ENCODE measurements at regions of chr11 and their contacts with region 1.

Region 1: DNA sequence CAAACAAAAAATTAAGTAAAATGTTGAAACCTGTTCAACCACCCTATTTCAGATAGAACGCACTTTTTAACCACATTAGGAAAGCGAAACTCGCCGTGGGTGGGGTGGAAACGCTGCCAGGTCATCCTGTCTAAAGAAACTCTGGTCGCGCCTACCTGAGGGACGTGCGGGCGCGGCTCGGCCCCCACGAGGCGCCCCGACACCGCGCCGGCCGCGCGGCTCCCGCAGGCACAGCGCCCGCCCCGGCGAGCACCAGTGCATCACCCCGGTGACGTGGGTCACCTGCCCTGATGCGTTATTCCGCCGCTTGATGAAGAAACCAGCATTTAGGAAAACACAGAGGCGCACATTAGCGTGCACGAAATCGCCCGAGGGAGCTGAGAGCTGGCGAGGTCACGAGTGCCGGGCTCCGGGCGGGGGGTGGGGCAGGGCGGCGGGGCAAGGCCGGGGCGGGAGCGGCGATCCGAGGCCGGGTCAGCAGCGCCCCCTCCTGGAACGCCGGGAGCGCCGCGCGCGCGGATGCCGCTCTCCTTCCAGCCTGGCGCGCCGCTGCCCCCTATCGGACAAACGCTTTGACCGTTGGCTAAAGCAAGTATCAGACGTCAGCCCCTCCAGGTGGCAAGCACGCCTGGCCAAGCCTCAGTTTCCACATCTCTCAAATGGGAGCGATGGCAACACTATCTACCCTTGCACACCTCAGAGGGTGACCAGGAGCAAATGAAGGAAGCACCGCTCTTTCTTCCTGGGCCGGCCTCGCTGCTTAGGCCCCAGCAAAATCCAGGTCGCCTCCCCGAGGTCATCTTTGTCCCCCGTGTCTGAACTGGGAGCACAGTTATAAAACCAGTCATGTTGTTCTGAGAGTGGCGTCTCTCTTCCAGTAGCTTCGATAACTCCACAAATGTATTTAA is 15.7 kb upstream of the SNX32 start:
- DNase-seq: peak; percentile 97 to 98
- H3K4me3 ChIP-seq: peak overlapping the region; percentile 61 to 81 (median 70)
- H3K27ac ChIP-seq: peak overlapping the region; percentile 68 to 89 (median 87)
- H3K4me1 ChIP-seq: peaks cover 4 to 43% (median 33%) of the 10 kb centered on the region in 4 donors
- H3K27me3 ChIP-seq: no peaks in the 10 kb centered on the region
- CTCF ChIP-seq: peak in 5 of 7 experiments; percentile 93 to 100 (median 99)
- EP300 ChIP-seq: no peak
- POLR2A ChIP-seq: no peak

Region 2: DNA sequence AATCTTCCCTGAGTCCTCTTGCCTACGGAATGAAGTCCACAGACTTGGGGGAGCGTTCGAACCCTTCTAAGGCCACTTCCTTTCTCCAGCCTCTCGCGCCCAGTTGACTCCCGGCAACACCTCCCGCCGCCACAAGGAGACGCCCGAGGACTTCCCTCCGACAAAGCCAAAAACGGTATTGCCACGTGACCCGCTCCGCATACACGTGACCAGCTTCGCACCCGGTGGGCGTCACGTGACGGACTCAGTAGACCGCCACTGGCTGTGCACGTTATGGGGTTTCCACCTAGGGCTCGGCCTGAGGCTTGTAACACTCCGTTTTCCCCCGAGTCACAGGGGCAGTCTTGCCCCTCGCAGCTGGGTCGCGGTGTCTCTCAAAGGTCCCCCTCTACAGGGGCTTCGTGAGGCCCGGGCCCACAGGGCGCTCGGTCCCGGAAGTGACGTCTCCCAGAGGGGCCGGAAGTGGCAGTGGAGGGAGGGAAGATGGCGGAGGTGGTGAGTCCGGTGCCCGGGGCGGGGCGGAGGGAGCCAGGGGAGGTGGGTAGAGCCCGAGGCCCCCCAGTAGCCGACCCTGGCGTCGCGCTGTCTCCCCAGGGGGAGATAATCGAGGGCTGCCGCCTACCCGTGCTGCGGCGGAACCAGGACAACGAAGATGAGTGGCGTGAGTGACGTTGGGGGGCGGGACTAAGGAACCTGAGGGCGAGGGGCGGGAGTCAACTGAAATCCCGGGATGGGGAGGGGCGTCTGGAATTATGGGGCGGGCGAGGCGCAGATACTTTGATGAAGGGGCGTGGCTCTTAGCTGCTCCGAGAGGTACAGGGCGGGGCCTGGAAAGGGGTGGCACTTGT is 106.1 kb before region 1 on chr11 and contains the start of gene KAT5:
- intact Hi-C with region 1: loop called (anchors 5 kb)
- DNase-seq: peak; percentile 99
- H3K4me3 ChIP-seq: peak within 1 kb of the TSS; percentile 53 to 67 (median 60)
- H3K27ac ChIP-seq: peak within 1 kb of the TSS; percentile 98 to 100 (median 99)
- H3K4me1 ChIP-seq: peaks cover 20 to 33% (median 27%) of the 10 kb centered on the region in 4 donors
- H3K27me3 ChIP-seq: no peaks in the 10 kb centered on the region
- CTCF ChIP-seq: peak in 6 of 7 experiments; percentile 97 to 100 (median 98)
- EP300 ChIP-seq: no peak
- POLR2A ChIP-seq: peak in 2 of 4 donors; percentile 54 to 86
- total RNA-seq, gene KAT5: 13.3 to 99.1 (median 58.7) TPM

Region 3: DNA sequence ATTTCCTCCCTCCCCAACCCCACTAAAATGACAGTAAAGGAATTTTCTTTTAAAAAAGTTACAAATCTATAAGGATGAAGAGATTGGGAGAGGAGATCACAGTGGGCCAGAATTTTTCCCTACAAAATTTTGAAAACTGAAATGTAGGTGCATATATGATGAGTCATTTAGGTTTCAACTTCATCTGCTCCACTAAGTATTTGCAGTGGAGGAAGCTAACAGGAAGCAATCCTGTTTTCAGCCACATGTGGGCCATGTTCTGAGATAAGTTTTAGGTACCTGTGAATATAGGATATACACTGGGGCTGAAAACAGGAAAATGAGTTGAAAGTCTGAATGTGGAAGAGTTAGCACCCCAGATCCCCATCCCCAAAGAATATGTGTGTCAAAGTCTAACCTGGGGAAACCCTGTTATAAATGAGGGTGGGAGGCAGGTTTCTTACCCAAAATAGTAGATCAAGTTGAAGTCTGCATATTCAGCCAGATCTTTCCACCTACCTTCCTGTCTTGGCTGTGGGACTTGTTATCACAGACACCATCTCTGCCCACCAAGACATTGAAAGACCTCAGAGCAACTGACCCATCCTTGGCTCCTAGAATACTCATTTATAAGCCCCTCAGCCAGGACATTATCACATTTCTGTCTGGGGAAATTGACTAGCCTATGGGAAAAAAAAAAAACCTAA is 339.2 kb after region 1 on chr11:
- intact Hi-C with region 1: no loop called
- DNase-seq: no peak
- H3K4me3 ChIP-seq: no peak overlapping the region
- H3K27ac ChIP-seq: no peak overlapping the region
- H3K4me1 ChIP-seq: peaks cover 0 to 11% (median 0%) of the 10 kb centered on the region in 4 donors
- H3K27me3 ChIP-seq: no peaks in the 10 kb centered on the region
- CTCF ChIP-seq: no peak
- EP300 ChIP-seq: no peak
- POLR2A ChIP-seq: no peak